ENCODE measurements at regions of chr2 and their contacts with region 1.

Region 1: DNA sequence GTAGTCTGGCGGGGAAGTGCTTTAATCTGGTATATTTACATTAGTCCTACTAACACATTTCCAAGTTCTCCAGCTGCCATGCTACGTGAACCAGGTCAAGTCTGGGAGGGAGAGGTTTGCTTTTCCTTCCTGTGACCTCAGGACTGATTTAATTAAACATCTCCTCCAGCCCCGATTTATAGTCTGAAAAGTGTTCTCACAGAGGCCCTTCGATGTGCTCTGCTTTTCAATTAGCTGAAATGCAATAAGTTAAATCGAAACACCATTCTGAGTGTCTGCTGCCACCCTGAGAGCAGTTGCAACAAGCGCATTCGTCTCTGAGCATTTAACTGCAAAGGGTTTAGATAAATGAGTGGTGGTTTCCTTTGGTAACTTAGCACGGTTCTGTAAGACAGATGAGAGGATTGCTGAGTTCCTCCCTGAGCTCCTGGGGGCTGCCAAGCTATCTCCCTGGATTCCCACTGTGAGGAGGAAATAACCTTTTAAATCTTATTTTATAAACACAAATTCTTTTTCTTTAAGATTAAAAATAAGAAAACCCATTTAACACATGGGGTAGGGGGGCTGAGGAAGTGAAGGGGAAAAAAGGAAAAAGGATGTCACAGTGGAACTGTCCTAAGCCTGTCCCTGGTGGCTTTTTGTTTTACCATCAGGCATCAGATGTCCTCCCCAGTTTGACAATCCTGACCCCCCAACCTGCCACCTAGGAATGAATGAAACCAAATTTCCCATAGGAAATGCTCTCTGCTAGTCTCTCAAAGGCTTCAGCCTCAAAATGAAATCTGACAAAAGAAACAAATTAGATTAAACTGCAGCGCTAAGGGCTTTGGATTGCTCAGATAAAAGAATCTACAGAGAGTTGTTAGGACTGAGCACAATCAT is 56.5 kb upstream of the CREB1 start:
- DNase-seq: no peak
- ATAC-seq: peak; percentile 77

Region 2: DNA sequence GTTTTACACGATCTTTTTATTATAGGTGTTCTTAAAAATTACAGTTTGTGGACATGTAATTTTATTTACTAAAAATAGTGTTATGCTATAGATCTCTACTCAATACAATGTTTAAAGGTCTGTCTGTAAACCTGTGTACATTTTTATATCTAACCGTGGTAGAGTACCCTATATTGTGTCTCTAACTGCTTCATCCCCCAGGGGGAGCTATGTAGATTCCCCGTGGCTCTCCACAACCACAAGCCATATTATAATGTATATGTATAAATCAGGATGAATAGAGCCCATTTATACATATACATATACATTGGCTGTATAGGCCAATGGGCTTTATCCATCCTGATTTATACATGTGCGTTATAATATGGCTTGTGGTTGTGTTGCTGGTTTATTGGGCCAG is 970.6 kb before region 1 on chr2:
- intact Hi-C with region 1: no loop called
- DNase-seq: no peak
- ATAC-seq: no peak

Region 3: DNA sequence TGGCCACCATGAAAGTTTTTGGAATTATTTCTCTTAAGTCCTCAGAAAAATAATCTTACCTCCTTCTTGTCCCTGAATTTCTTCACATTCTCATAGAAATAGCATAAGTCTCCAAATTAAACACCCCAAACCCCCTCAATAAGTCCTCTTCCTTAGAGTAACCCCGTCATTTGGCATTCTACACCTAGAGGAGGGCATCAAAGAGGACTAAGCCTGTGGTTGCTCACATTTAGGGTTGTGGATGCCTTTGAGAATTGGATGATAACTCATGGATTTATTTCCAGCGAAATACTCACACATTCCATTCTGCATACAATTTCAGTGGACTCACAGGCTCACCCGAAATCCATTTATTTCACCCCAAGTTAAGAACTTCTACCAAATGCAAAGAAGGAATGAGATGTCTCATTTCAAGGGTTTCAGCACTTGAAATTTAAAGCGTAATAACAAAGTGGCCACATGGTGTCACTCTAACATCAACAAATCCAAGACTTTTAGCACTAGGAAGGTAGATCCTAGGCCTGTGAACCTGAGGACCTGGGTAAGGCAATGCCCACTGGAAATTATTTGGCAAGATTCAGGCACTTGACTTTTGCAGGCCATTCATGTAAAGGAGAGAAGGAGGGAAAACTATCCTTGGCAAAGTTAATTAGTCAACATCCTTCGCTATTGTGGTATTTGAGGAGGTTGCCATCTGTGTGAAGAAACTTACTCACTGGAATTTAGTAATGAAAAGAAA is 779.7 kb before region 1 on chr2:
- intact Hi-C with region 1: loop called (anchors 5 kb)
- DNase-seq: no peak
- ATAC-seq: peak; percentile 79

Region 4: GRCh38 chr2:206800506-206801417 is 672.5 kb before region 1 on chr2:
- intact Hi-C with region 1: loop called (anchors 2 kb)
- DNase-seq: peak; percentile 49
- ATAC-seq: peak; percentile 88

Region 5: GRCh38 chr2:206981739-206982340 is 491.4 kb before region 1 on chr2:
- intact Hi-C with region 1: loop called (anchors 2 kb)
- DNase-seq: peak; percentile 84
- ATAC-seq: peak; percentile 93

Region 6: GRCh38 chr2:207046724-207047123 is 426.6 kb before region 1 on chr2:
- intact Hi-C with region 1: loop called (anchors 10 kb)
- DNase-seq: no peak
- ATAC-seq: peak; percentile 89

Region 7: GRCh38 chr2:207166039-207166348 is 307.3 kb before region 1 on chr2:
- intact Hi-C with region 1: loop called (anchors 10 kb)
- DNase-seq: peak; percentile 99
- ATAC-seq: peak; percentile 91

Region 8: DNA sequence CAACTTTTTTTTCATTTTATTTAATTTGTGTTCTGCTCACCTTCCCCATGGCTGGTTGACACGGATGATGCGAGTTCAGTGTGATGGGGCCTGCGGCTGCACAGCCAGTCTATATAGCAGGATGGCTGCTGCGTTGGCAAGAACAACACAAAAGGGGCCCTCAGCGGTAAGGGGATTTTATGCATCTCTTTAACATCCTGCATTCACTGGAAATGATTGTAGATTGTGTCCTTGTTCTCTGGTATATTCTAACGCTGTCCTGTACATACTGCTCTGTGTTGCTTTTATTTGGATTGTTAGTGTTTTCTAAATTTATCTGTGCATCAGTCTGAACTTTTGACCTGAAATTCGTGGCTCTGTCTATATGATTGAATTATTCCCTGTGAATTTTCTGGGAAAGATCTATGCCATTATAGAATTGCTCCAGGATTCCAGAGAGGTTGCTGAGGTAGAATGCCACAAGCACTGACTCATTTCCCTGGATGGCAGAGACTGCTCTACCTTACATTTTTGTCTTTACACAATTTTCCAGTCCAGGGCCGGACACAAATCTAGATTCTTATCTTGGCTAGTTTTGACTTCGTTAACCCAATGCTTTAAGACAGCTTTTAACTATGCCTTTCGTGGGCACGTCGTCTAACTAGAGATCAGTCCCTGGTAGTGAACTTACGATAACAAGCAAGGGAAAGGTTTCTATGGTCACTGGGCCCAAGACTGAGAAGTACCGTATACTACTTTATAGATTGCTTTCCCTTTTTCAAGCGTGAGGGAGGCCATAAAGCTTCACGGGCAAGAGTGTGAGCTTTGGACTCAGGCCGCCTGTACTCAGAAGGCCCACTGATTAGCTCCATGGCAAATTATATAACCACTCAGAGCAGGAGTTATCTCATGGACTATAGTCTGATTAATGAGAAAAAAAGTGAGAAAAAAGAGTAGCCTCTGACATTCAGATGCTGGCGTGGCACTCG is 656.7 kb after region 1 on chr2 and contains the start of gene CRYGC:
- intact Hi-C with region 1: no loop called
- DNase-seq: no peak
- ATAC-seq: no peak
- total RNA-seq, gene CRYGC: not detected

Measured in Right ventricle myocardium superior (tissue), 1 donor.